ENCODE measurements at regions of chr7 and their contacts with region 1.

Region 1: GRCh38 chr7:111953611-111954010 is 252.6 kb downstream of the DOCK4 start:
- DNase-seq: no peak

Region 2: GRCh38 chr7:111855161-111855856 is 98.3 kb before region 1 on chr7:
- intact Hi-C with region 1: no loop called
- DNase-seq: no peak

Region 3: GRCh38 chr7:112022128-112022527 is 68.5 kb after region 1 on chr7:
- intact Hi-C with region 1: no loop called
- DNase-seq: no peak

Region 4: GRCh38 chr7:112206238-112207044 is 252.8 kb after region 1 on chr7 and contains the starts of genes DOCK4 and ZNF277:
- intact Hi-C with region 1: loop called (anchors 10 kb)
- DNase-seq: peak; percentile 99
- total RNA-seq, gene DOCK4: 18.5 TPM
- total RNA-seq, gene ZNF277: 16.3 TPM

Region 5: DNA sequence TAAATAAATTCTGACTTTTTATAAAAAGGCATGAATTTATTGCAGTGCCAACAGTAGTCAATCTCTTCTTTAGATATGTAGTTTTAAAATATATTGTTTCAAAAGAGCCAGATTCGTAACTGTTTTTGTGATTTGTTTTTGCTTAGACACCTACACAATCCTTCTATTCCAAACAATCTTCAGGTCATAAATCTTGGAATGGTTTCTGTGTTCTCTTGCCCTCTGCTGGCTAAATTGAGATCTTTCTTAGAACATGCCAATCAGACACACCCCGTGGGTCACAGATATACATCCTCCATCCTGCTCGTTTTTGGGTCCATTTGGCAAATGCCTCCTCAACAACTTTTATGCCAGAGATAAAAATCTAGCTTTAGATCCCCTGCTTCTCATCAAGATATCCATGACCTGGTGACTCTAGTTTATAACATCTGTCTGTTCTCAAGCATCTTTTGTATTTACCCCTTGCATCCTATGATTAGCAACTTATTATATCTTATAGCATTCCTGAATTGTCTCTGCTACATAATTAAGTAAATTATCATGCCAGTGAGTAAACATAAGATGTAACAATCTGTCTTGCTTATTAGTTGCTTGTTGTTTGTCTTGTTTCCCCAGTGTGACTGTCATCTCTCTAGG is 461.4 kb after region 1 on chr7:
- intact Hi-C with region 1: loop called (anchors 10 kb)
- DNase-seq: no peak